Mucosa of descending colon (tissue), 3 donors: ENCODE measurements at regions of chr15 and their contacts with region 1.

Region 1: GRCh38 chr15:74776821-74777768 is 4.8 kb upstream of the CSK start:
- DNase-seq: peak in 2 of 3 donors; percentile 54 to 74
- ATAC-seq: peak; percentile 21
- H3K4me3 ChIP-seq: no peak overlapping the region
- H3K4me1 ChIP-seq: peaks cover 53% of the 10 kb centered on the region
- CTCF ChIP-seq: no peak

Region 2: GRCh38 chr15:73495171-73495570 is 1281.9 kb before region 1 on chr15:
- intact Hi-C with region 1: no loop called
- DNase-seq: no peak
- ATAC-seq: no peak
- H3K4me3 ChIP-seq: no peak overlapping the region
- H3K4me1 ChIP-seq: no peaks in the 10 kb centered on the region
- CTCF ChIP-seq: no peak

Region 3: GRCh38 chr15:74882528-74882927 is 105.4 kb after region 1 on chr15:
- intact Hi-C with region 1: no loop called
- DNase-seq: no peak
- ATAC-seq: no peak
- H3K4me3 ChIP-seq: no peak overlapping the region
- H3K4me1 ChIP-seq: no peaks in the 10 kb centered on the region
- CTCF ChIP-seq: no peak

Region 4: DNA sequence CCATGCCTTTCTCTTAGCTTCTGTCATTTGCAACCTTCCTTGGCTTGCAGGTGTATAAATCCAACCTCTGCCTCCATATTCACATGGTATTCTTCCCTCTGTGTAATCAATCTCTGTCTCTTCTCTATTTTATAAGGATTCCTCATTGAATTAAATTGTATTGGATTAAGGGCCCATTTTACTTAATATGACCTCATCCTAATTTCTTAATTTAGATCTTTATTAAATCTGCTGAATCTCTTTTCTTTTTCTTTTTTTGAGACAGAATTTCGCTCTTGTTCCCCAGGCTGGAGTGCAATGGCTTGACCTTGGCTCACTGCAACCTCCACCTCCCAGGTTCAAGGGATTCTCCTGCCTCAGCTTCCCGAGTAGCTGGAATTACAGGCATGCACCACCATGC is 171.7 kb after region 1 on chr15:
- intact Hi-C with region 1: loop called in 1 of 2 experiments (anchors 5 kb)
- DNase-seq: no peak
- ATAC-seq: no peak
- H3K4me3 ChIP-seq: no peak overlapping the region
- H3K4me1 ChIP-seq: peaks cover 4% of the 10 kb centered on the region
- CTCF ChIP-seq: no peak